ENCODE measurements at regions of chr19 and their contacts with region 1.

Region 1: DNA sequence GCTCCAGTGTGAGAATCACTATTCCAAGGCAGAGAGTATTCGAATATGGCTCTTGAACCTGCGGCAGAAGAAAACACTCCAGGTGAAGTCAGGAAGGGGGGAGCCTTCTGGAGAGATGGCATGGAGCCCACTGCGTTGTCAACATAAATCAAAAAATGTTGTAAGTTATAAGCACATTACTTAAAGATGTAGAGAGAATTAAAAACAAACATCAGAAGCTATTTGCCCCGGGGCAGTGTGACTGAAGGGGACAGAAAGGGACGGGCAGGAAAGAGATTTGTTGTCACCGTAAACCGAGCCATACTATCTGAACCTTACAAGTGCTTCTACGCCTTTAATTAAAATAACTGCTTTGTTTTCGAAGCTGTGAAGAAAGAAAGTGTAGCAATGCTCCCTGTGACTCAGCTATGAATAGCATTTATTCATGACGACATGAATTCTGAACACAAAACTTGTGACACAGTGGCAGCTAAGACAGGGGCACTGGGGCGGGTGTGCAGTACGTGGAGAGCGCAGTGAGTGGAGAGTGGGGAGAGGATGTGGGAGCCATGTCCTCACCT is 30.1 kb downstream of the ZNF787 start:
- DNase-seq: peak; percentile 61
- ATAC-seq: peak; percentile 71
- H3K4me3 ChIP-seq: no peak overlapping the region
- H3K27ac ChIP-seq: no peak overlapping the region
- H3K4me1 ChIP-seq: peaks cover 3% of the 10 kb centered on the region; the same call in 1 of the 2 replicates
- H3K27me3 ChIP-seq: no peaks in the 10 kb centered on the region
- CTCF ChIP-seq: no peak
- POLR2A ChIP-seq: no peak
- RAD21 ChIP-seq: no peak

Region 2: GRCh38 chr19:56115490-56115889 is 24.5 kb after region 1 on chr19:
- CTCF ChIA-PET with region 1: no interaction called
- POLR2A ChIA-PET with region 1: interaction called, 23 read pairs
- dilution Hi-C with region 1: no loop called
- in situ Hi-C with region 1: no loop called
- intact Hi-C with region 1: no loop called
- DNase-seq: no peak
- ATAC-seq: no peak
- H3K4me3 ChIP-seq: no peak overlapping the region
- H3K27ac ChIP-seq: no peak overlapping the region
- H3K4me1 ChIP-seq: peaks cover 29% of the 10 kb centered on the region
- H3K27me3 ChIP-seq: no peaks in the 10 kb centered on the region
- CTCF ChIP-seq: no peak
- POLR2A ChIP-seq: no peak
- RAD21 ChIP-seq: no peak

Region 3: GRCh38 chr19:56144376-56144775 is 53.4 kb after region 1 on chr19:
- CTCF ChIA-PET with region 1: no interaction called
- POLR2A ChIA-PET with region 1: no interaction called
- dilution Hi-C with region 1: no loop called
- in situ Hi-C with region 1: no loop called
- intact Hi-C with region 1: no loop called
- DNase-seq: no peak
- ATAC-seq: no peak
- H3K4me3 ChIP-seq: no peak overlapping the region
- H3K27ac ChIP-seq: no peak overlapping the region
- H3K4me1 ChIP-seq: no peaks in the 10 kb centered on the region; the same call in 1 of the 2 replicates
- H3K27me3 ChIP-seq: no peaks in the 10 kb centered on the region
- CTCF ChIP-seq: no peak
- POLR2A ChIP-seq: no peak
- RAD21 ChIP-seq: no peak